Activated CD8-positive, alpha-beta memory T cell treated with anti-CD3 and anti-CD28 coated beads, Interleukin-2, amount 10 ng/mL, durations not matched to agents 7 days and 5 days (primary cell): ENCODE measurements at regions of chr15 and their contacts with region 1.

Region 1: GRCh38 chr15:65856821-65857455 is 12.4 kb upstream of the RAB11A start:
- DNase-seq: peak; percentile 89
- ATAC-seq: peak; percentile 89
- H3K4me3 Mint-ChIP-seq: no peak overlapping the region
- H3K27ac Mint-ChIP-seq: no peak overlapping the region
- H3K4me1 Mint-ChIP-seq: peaks cover 10% of the 10 kb centered on the region
- H3K27me3 Mint-ChIP-seq: peaks cover 12% of the 10 kb centered on the region

Region 2: GRCh38 chr15:65595960-65596359 is 261.0 kb before region 1 on chr15:
- CTCF ChIA-PET with region 1: interaction called, 14 read pairs
- DNase-seq: no peak
- ATAC-seq: no peak
- H3K4me3 Mint-ChIP-seq: no peak overlapping the region
- H3K27ac Mint-ChIP-seq: no peak overlapping the region
- H3K4me1 Mint-ChIP-seq: peaks cover 3% of the 10 kb centered on the region
- H3K27me3 Mint-ChIP-seq: no peaks in the 10 kb centered on the region

Region 3: GRCh38 chr15:65610871-65611718 is 245.8 kb before region 1 on chr15 and contains the start of gene INTS14:
- CTCF ChIA-PET with region 1: interaction called, 12 read pairs
- DNase-seq: peak; percentile 96
- ATAC-seq: peak; percentile 99
- H3K4me3 Mint-ChIP-seq: peak within 1 kb of the TSS; percentile 99
- H3K27ac Mint-ChIP-seq: peak within 1 kb of the TSS; percentile 97
- H3K4me1 Mint-ChIP-seq: peaks cover 52% of the 10 kb centered on the region
- H3K27me3 Mint-ChIP-seq: no peaks in the 10 kb centered on the region
- total RNA-seq, gene INTS14: 44.2 to 51.7 TPM

Region 4: GRCh38 chr15:65621638-65622037 is 235.3 kb before region 1 on chr15 and contains the start of gene SLC24A1:
- CTCF ChIA-PET with region 1: no interaction called
- DNase-seq: no peak
- ATAC-seq: no peak
- H3K4me3 Mint-ChIP-seq: no peak within 1 kb of the TSS
- H3K27ac Mint-ChIP-seq: no peak within 1 kb of the TSS
- H3K4me1 Mint-ChIP-seq: peaks cover 3% of the 10 kb centered on the region
- H3K27me3 Mint-ChIP-seq: peaks cover 3% of the 10 kb centered on the region
- total RNA-seq, gene SLC24A1: 4.2 to 4.3 TPM

Region 5: DNA sequence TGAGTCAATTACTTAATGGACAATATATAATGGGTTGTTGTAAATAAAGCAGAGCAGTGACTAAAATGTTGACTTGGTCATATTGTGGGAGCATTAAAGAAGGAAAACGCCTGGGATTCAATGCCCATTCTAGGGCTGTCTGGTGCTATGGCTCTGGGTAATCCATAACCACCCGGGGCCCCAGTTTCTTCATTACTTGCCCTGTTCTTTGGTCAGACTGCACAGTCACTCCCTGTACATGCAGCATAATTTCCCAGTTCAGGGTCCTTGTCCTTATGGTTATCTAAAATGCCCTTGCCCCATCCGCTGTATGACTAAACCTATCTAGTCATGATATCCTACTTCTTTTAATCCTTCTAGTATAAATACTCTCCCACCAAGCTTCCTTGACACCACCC is 37.4 kb before region 1 on chr15:
- CTCF ChIA-PET with region 1: no interaction called
- DNase-seq: no peak
- ATAC-seq: peak; percentile 6
- H3K4me3 Mint-ChIP-seq: no peak overlapping the region
- H3K27ac Mint-ChIP-seq: peak overlapping the region; percentile 38
- H3K4me1 Mint-ChIP-seq: peaks cover 56% of the 10 kb centered on the region
- H3K27me3 Mint-ChIP-seq: peaks cover 2% of the 10 kb centered on the region